H1 (cell line): ENCODE measurements at regions of chr18 and their contacts with region 1.

Region 1: DNA sequence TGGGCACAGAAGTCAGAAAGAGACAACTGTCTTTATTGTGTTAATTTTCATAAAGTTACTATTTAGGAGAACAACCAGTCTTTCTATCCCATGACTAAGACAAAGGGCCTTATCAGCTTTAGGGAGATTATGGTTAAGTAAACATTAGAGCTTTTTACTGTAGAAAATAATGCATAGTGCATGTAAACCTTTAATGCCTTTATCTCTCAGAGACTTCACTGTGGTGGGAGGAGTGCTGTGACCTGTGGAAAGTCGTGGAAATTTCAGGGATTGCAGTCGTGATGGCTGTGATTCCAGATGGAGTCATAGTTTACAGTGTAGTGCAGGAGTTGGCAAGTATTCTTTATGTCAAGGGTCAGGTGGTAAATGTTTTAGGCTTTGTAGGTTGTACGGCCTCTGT is 15.8 kb downstream of the ZNF236 start:
- DNase-seq: no peak
- H3K4me3 ChIP-seq: no peak overlapping the region
- H3K27ac ChIP-seq: no peak overlapping the region
- H3K4me1 ChIP-seq: no peaks in the 10 kb centered on the region
- H3K27me3 ChIP-seq: no peaks in the 10 kb centered on the region
- CTCF ChIP-seq: no peak
- EP300 ChIP-seq: no peak
- POLR2A ChIP-seq: no peak
- RAD21 ChIP-seq: no peak

Region 2: DNA sequence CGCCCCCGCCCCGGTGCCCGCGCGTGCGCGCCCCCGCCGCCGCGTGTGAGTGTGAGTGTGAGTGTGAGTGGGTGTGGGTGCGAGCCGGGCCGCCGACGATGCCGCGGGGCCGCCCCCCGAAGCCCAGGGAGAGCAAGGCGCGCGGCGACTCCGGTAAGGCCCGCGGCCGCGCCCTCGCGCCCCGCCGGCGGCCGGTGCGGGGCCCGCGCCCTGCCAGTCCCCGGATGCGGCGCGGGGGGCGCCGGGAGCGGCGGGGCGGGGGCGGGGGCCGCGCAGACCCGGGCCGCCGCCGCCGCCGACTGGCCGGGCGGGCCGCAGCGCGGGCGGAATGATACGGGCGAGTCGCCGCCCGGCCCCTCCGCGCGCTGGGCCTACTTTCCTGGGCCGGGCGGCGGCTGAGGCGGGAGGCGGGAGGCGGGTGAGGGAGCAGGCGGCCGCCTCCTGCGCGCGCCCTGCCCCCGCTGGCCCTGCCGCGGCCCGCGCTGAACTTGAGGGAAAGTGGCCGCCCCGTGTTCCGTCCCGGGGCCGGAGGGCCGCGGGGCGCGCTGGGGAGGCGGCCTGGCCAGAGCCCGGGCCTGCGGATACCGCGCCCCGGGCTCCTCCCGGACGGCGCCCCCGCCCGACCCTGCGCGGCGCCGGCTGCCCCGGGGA is 15.5 kb before region 1 on chr18 and contains the start of gene ZNF236:
- CTCF ChIA-PET with region 1: interaction called, 3 read pairs
- POLR2A ChIA-PET with region 1: interaction called, 11 read pairs
- DNase-seq: peak in 1 of 2 experiments; percentile 69
- H3K4me3 ChIP-seq: peak within 1 kb of the TSS; percentile 94 to 99 (median 96)
- H3K27ac ChIP-seq: peak within 1 kb of the TSS; percentile 79
- H3K4me1 ChIP-seq: peaks cover 0 to 3% (median 1%) of the 10 kb centered on the region in 4 experiments; a peak in 4 of 7 replicates
- H3K27me3 ChIP-seq: no peaks in the 10 kb centered on the region
- CTCF ChIP-seq: no peak
- EP300 ChIP-seq: peak in 1 of 2 experiments; percentile 78; a peak in 1 of 3 replicates
- POLR2A ChIP-seq: peak; percentile 77 to 80
- RAD21 ChIP-seq: no peak
- total RNA-seq, gene ZNF236: 14.2 and 14.5 TPM in 2 replicates